CD4-positive, alpha-beta memory T cell (primary cell): ENCODE measurements at regions of chr2 and their contacts with region 1.

Region 1: DNA sequence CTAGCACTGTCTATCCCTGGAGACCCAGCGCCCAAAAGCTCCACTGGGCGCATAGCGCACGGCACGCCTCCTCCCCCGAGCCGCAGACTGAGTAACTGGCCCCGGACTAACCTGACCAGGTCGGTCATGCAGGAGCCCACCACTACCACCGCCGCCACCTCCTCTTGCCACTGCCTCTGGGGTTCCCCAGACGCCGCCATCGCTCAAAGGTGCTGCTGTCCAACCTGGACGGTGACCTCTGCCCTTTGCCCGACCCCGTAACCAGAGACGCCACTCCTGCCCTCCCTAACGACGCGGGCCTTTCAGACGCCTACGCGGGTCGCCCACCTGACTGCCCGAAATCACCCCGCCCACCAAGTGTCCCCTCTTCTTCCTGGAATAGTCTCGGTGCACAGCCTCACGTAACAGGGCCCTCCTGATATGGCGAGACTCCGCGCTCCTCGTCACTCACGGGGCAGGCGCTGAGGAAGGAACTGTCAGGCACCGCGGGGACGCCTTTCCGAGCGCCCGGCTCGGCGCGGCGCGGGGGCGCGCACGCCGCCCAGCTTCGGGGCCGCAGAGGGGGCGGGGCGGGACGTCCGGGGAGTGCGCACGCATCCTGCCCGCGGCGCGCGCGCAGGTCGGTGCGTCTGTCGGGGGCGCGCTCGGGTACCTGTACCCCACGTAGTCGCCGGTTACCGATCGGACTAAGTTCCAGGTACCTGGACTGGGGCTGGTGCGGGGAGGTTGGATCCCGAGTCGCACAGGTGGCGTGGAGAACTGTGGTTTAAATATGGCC is at the starts of genes BABAM2 and RBKS:
- DNase-seq: peak; percentile 93 to 95 (median 93)
- H3K4me3 ChIP-seq: peak within 1 kb of the TSS; percentile 92 to 99
- H3K4me3 Mint-ChIP-seq: peak within 1 kb of the TSS; percentile 93 to 100 (median 98)
- H3K27ac ChIP-seq: peak within 1 kb of the TSS; percentile 98
- H3K27ac Mint-ChIP-seq: peak within 1 kb of the TSS; percentile 100
- H3K4me1 ChIP-seq: peaks cover 45% of the 10 kb centered on the region
- H3K4me1 Mint-ChIP-seq: peaks cover 24 to 57% (median 47%) of the 10 kb centered on the region in 4 donors
- H3K27me3 ChIP-seq: no peaks in the 10 kb centered on the region
- H3K27me3 Mint-ChIP-seq: peaks cover 1 to 5% of the 10 kb centered on the region in 2 donors
- total RNA-seq, gene BABAM2: 37.3 to 41.2 TPM
- total RNA-seq, gene RBKS: 1.2 to 1.7 TPM

Region 2: DNA sequence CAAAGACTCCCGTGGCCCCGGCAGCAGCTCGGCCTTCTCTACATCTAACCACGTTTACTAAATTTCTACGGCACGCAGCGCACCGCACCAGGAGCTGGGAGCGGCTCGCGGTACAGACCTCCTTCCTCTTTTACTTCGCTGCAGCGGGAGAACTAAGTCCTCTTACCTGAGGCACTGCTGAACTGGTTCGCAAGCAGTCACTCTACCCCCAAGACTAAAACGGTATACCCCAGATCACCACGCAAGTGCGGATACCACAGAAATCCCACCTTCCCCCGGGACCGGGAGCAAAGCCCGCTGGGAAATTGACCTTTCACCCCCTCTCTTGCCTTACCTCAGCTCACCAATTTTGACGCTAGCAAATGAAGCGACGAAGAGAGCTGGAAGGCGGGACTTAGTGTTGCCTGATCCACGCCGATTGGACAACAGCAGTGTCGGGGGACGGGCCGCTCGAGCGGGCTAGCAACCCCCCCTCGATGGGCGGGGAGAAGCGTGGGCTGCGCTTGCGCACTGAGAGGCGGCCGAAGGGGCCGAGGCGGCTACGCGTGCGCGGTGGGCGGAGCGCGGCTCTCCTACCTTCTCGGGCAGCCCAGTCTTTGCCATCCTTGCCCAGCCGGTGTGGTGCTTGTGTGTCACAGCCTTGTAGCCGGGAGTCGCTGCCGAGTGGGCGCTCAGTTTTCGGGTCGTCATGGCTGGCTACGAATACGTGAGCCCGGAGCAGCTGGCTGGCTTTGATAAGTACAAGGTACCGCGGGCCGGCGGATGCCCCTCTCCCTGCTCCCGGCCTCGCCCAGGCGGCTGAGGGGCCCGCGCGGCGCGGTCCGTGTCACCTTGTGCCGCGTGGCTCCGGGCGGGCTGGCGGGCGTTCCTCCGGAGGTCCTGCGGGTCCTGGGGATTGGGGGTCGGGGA is 1544.5 kb before region 1 on chr2 and contains the start of gene SELENOI:
- CTCF ChIA-PET with region 1: no interaction called
- POLR2A ChIA-PET with region 1: no interaction called
- intact Hi-C with region 1: loop called (anchors 5 kb)
- DNase-seq: peak; percentile 99 to 100 (median 100)
- H3K4me3 ChIP-seq: peak within 1 kb of the TSS; percentile 87 to 98
- H3K4me3 Mint-ChIP-seq: peak within 1 kb of the TSS; percentile 97 to 100 (median 98)
- H3K27ac ChIP-seq: peak within 1 kb of the TSS; percentile 91
- H3K27ac Mint-ChIP-seq: peak within 1 kb of the TSS; percentile 91 to 100 (median 100)
- H3K4me1 ChIP-seq: peaks cover 42% of the 10 kb centered on the region
- H3K4me1 Mint-ChIP-seq: peaks cover 25 to 50% (median 33%) of the 10 kb centered on the region in 4 donors
- H3K27me3 ChIP-seq: no peaks in the 10 kb centered on the region
- H3K27me3 Mint-ChIP-seq: no peaks in the 10 kb centered on the region
- total RNA-seq, gene SELENOI: 19.6 to 20.0 TPM

Region 3: GRCh38 chr2:27920148-27920885 is 30.0 kb after region 1 on chr2:
- CTCF ChIA-PET with region 1: no interaction called
- POLR2A ChIA-PET with region 1: interaction called, 23 read pairs
- intact Hi-C with region 1: loop called (anchors 1 kb)
- DNase-seq: peak; percentile 58 to 77 (median 65)
- H3K4me3 ChIP-seq: no peak overlapping the region
- H3K4me3 Mint-ChIP-seq: peak overlapping the region in 6 of 8 donors; percentile 5 to 69 (median 27)
- H3K27ac ChIP-seq: peak overlapping the region; percentile 34
- H3K27ac Mint-ChIP-seq: peak overlapping the region; percentile 36 to 89 (median 73)
- H3K4me1 ChIP-seq: peaks cover 20% of the 10 kb centered on the region
- H3K4me1 Mint-ChIP-seq: peaks cover 12 to 30% (median 13%) of the 10 kb centered on the region in 4 donors
- H3K27me3 ChIP-seq: no peaks in the 10 kb centered on the region
- H3K27me3 Mint-ChIP-seq: no peaks in the 10 kb centered on the region

Region 4: GRCh38 chr2:28392297-28393113 is 502.2 kb after region 1 on chr2 and contains the start of gene FOSL2:
- CTCF ChIA-PET with region 1: no interaction called
- POLR2A ChIA-PET with region 1: interaction called, 14 read pairs
- intact Hi-C with region 1: loop called (anchors 1 kb)
- DNase-seq: peak; percentile 97 to 99 (median 98)
- H3K4me3 ChIP-seq: peak within 1 kb of the TSS; percentile 84 to 87
- H3K4me3 Mint-ChIP-seq: peak within 1 kb of the TSS; percentile 90 to 100 (median 94)
- H3K27ac ChIP-seq: peak within 1 kb of the TSS; percentile 89
- H3K27ac Mint-ChIP-seq: peak within 1 kb of the TSS in 6 of 7 donors; percentile 98 to 100 (median 100)
- H3K4me1 ChIP-seq: peaks cover 44% of the 10 kb centered on the region
- H3K4me1 Mint-ChIP-seq: peaks cover 7 to 44% (median 17%) of the 10 kb centered on the region in 4 donors
- H3K27me3 ChIP-seq: no peaks in the 10 kb centered on the region
- H3K27me3 Mint-ChIP-seq: peaks cover 0 to 3% of the 10 kb centered on the region in 2 donors
- total RNA-seq, gene FOSL2: 6.6 to 6.7 TPM

Region 5: GRCh38 chr2:28621172-28622100 is 731.1 kb after region 1 on chr2:
- CTCF ChIA-PET with region 1: no interaction called
- POLR2A ChIA-PET with region 1: no interaction called
- intact Hi-C with region 1: loop called (anchors 5 kb)
- DNase-seq: peak; percentile 92 to 97 (median 95)
- H3K4me3 ChIP-seq: peak overlapping the region in 1 of 2 donors; percentile 39
- H3K4me3 Mint-ChIP-seq: peak overlapping the region; percentile 65 to 84 (median 76)
- H3K27ac ChIP-seq: peak overlapping the region; percentile 97
- H3K27ac Mint-ChIP-seq: peak overlapping the region; percentile 98 to 100 (median 100)
- H3K4me1 ChIP-seq: peaks cover 98% of the 10 kb centered on the region
- H3K4me1 Mint-ChIP-seq: peaks cover 78 to 98% (median 80%) of the 10 kb centered on the region in 4 donors
- H3K27me3 ChIP-seq: no peaks in the 10 kb centered on the region
- H3K27me3 Mint-ChIP-seq: no peaks in the 10 kb centered on the region